PC-3 (cell line): ENCODE measurements at regions of chr5 and their contacts with region 1.

Region 1: GRCh38 chr5:15794052-15794985 is 294.3 kb downstream of the FBXL7 start:
- DNase-seq: no peak
- ATAC-seq: no peak
- H3K4me3 ChIP-seq: no peak overlapping the region
- H3K27ac ChIP-seq: no peak overlapping the region
- H3K4me1 ChIP-seq: no peaks in the 10 kb centered on the region
- H3K27me3 ChIP-seq: no peaks in the 10 kb centered on the region
- CTCF ChIP-seq: peak; percentile 51

Region 2: GRCh38 chr5:15376803-15377202 is 417.5 kb before region 1 on chr5:
- CTCF ChIA-PET with region 1: no interaction called
- POLR2A ChIA-PET with region 1: no interaction called
- intact Hi-C with region 1: no loop called
- DNase-seq: no peak
- ATAC-seq: no peak
- H3K4me3 ChIP-seq: no peak overlapping the region
- H3K27ac ChIP-seq: no peak overlapping the region
- H3K4me1 ChIP-seq: no peaks in the 10 kb centered on the region
- H3K27me3 ChIP-seq: no peaks in the 10 kb centered on the region
- CTCF ChIP-seq: no peak

Region 3: DNA sequence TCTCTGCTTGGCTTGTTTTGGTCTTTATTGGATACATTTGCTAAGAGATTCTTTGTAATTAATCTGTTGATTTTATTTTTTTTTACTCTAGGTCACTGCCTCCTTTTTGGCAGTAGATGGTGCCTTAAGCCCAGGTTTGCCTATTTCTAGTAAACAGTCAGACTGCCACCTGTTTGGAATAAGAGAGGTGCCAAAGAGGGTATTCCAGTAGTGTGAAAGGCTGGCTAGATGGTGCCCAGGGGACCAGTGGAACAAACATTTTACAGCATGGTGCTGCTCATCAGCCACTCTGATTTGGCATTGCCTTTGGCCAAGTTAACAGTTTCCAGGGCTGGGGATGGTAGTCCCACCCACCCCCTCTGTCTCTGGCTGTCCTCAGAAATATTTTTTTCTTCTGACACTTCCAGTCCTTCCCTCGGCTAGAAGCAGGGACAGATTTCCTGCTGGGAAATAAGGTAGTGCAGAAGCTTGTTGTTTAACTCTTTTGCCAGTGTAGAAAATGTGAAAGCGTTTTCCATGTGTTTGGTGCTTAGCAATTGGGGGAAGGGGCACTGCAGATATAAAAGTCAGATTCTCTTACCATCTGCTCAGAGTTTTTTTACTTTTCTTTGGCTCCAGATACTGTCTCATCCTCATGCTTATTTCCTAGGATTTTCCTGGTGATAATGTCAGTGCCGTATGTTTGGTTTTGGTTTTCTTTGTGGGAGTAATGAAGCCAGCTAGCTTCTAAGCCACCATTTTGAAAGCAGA is 330.9 kb before region 1 on chr5:
- CTCF ChIA-PET with region 1: no interaction called
- POLR2A ChIA-PET with region 1: no interaction called
- intact Hi-C with region 1: loop called (anchors 5 kb)
- DNase-seq: no peak
- ATAC-seq: no peak
- H3K4me3 ChIP-seq: no peak overlapping the region
- H3K27ac ChIP-seq: no peak overlapping the region
- H3K4me1 ChIP-seq: no peaks in the 10 kb centered on the region
- H3K27me3 ChIP-seq: no peaks in the 10 kb centered on the region
- CTCF ChIP-seq: 0 out of 2 replicates have a peak, but pooled peaks have one; percentile 22

Region 4: GRCh38 chr5:15691536-15691935 is 102.8 kb before region 1 on chr5:
- CTCF ChIA-PET with region 1: no interaction called
- POLR2A ChIA-PET with region 1: no interaction called
- intact Hi-C with region 1: no loop called
- DNase-seq: no peak
- ATAC-seq: no peak
- H3K4me3 ChIP-seq: no peak overlapping the region
- H3K27ac ChIP-seq: no peak overlapping the region
- H3K4me1 ChIP-seq: no peaks in the 10 kb centered on the region
- H3K27me3 ChIP-seq: no peaks in the 10 kb centered on the region
- CTCF ChIP-seq: no peak